Activated CD8-positive, alpha-beta T cell treated with anti-CD3 and anti-CD28 coated beads, Interleukin-2, amount 10 ng/mL, durations not matched to agents 7 days and 5 days (primary cell): ENCODE measurements at regions of chr7 and their contacts with region 1.

Region 1: GRCh38 chr7:3117488-3118231 is 74.0 kb upstream of the CARD11 start:
- DNase-seq: peak; percentile 69
- ATAC-seq: peak; percentile 64
- H3K4me3 Mint-ChIP-seq: peak overlapping the region; percentile 85
- H3K27ac Mint-ChIP-seq: peak overlapping the region; percentile 95
- H3K4me1 Mint-ChIP-seq: peaks cover 88% of the 10 kb centered on the region
- H3K27me3 Mint-ChIP-seq: no peaks in the 10 kb centered on the region

Region 2: GRCh38 chr7:3103614-3104398 is 13.9 kb before region 1 on chr7:
- CTCF ChIA-PET with region 1: interaction called, 24 read pairs
- POLR2A ChIA-PET with region 1: interaction called, 15 read pairs
- DNase-seq: peak; percentile 48
- ATAC-seq: peak; percentile 6
- H3K4me3 Mint-ChIP-seq: no peak overlapping the region
- H3K27ac Mint-ChIP-seq: peak overlapping the region; percentile 91
- H3K4me1 Mint-ChIP-seq: peaks cover 81% of the 10 kb centered on the region
- H3K27me3 Mint-ChIP-seq: no peaks in the 10 kb centered on the region